Naive thymus-derived CD8-positive, alpha-beta T cell (primary cell): ENCODE measurements at regions of chr12 and their contacts with region 1.

Region 1: GRCh38 chr12:49548822-49549648 is 10.2 kb downstream of the KCNH3 start:
- DNase-seq: peak in 8 of 10 donors; percentile 20 to 47 (median 40)
- ATAC-seq: peak; percentile 60 to 73
- H3K4me3 Mint-ChIP-seq: peak overlapping the region; percentile 79 to 91 (median 84)
- H3K27ac Mint-ChIP-seq: peak overlapping the region in 9 of 10 donors; percentile 41 to 89 (median 77)
- H3K4me1 Mint-ChIP-seq: peaks cover 8 to 51% (median 26%) of the 10 kb centered on the region in 4 donors
- H3K27me3 Mint-ChIP-seq: peaks cover 0 to 5% (median 0%) of the 10 kb centered on the region in 5 donors

Region 2: DNA sequence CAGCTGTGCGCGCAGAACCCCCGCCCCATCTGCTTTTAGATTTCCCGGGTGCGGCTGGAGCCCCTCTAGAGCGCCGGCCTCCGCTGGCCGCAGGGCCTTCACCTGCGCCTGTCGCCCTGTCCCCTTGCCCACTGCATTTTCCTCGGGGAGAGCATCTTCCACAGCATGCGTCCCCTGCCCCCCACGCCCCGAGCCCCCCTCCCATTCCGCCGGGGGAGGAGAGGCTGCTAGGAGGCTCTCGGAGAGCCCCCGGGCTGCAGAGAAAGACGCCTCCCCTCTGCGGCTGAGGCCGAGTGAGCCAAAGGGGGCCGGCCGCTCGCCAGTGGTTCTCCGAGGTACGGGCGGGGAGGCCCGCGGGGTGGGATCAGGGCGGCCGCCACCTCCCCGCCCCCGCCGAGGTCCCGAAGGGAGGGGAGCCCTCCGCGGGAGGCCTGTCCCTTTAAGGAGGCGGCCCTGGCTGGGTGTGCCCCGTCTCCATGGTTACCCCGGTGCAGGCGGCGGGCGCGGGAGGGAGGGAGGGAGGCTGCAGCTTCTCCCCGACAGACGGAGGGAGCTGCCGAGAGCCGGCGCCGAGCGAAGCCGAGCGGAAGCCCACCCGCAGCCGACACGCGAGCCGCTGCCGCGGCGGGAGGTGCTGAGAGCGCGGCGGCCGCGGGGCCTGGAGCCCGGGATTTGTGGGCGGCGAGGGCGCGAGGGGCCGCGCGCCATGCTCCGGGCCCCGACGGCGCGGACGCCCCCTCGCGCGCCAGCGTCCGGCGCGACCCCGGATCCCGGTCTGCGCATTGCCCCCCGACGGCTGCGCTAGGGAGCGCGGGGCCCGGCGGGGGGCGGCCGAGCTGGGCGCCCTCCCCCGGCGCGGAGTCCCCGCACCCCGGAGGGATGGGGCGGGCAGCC is 10.3 kb before region 1 on chr12 and contains the start of gene KCNH3:
- POLR2A ChIA-PET with region 1: interaction called, 24 read pairs
- DNase-seq: peak; percentile 85 to 98 (median 88)
- ATAC-seq: peak; percentile 83 to 91
- H3K4me3 Mint-ChIP-seq: peak within 1 kb of the TSS; percentile 75 to 88 (median 80)
- H3K27ac Mint-ChIP-seq: peak within 1 kb of the TSS in 9 of 10 donors; percentile 17 to 90 (median 67)
- H3K4me1 Mint-ChIP-seq: peaks cover 22 to 50% (median 44%) of the 10 kb centered on the region in 4 donors
- H3K27me3 Mint-ChIP-seq: peaks cover 0 to 5% (median 0%) of the 10 kb centered on the region in 5 donors
- polyA plus RNA-seq, gene KCNH3: 2.4 to 5.7 (median 3.4) TPM